Activated CD4-positive, alpha-beta memory T cell treated with anti-CD3 and anti-CD28 coated beads for 36 hours (primary cell): ENCODE measurements at regions of chr17 and their contacts with region 1.

Region 1: DNA sequence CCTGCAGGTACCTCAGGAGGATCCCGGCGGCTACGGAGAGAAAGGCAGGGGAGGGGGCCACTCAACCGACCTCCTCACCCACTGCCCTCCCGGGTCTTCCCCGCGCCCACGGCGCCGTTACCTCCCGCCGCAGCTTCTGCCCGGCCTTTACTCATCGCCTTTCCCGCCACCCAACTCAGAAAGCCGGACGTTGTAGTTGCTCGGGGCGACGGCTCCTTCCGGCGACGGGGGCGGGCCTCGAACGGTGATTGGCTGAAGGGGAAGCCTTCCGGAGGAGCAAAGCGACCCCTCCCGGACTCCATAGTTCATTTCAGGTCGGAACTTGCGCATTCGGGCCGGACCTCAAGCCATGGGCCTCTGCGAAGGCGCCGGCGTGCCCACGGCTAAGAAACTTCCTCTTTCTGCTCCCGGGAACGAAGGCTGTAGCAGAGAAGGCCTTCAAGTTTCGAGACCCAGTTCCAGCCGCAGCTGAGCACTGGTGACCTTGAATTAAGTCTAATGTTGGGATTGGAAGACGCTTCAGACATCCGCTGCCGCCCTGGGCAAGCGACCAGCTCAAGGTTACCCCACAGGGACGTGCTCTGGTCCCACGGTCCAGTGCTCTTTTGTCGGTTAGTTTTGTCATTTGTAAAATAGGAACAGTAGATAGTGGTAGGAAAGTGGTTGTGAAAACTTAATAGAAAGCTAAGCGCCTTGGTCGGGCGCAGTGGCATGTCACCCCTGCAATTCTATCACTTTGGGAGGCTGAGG is at the start of gene PSMC3IP:
- DNase-seq: peak; percentile 98
- H3K4me3 Mint-ChIP-seq: peak within 1 kb of the TSS; percentile 91
- H3K27ac Mint-ChIP-seq: peak within 1 kb of the TSS; percentile 97
- H3K4me1 Mint-ChIP-seq: peaks cover 28% of the 10 kb centered on the region
- H3K27me3 Mint-ChIP-seq: no peaks in the 10 kb centered on the region
- total RNA-seq, gene PSMC3IP: 26.4 to 29.4 TPM

Region 2: DNA sequence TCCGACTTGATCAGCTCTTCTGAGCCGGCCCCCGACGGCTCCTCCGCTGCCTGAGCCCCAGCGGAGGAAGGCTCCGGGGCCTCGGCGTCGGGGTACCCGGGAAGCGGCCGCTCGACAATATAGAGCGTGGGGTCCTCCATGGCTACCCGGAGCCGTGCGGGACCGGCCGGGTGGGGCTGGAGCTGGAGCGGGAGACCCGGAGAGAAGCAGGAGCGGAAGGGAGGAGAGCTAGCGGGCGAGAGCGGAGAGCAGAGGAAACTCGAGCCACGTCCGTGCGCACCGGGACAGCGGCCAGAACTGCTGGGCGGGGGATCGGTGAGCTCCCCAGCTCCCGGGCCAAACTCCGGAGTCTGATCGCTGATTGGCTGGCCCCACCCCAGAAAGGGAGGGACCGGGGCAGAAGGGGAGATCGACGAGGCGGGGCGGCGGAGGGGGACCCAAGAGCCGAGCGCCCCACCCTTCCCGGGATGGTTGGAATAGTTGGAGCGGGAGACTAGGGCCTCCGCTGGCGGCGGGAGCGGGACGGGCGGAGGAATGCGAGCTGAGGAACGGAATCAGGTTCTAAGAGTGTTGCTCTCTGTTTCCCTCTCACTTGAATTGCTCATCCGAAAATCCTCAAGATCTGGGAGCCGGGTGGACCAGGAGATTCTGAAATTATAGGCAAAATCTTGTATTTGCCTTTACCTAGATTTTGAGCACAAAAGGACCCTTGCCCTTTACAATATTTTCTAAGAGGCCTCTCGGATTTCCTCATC is 154.6 kb before region 1 on chr17 and contains the start of gene CAVIN1:
- CTCF ChIA-PET with region 1: no interaction called
- POLR2A ChIA-PET with region 1: no interaction called
- intact Hi-C with region 1: no loop called
- DNase-seq: peak; percentile 34
- H3K4me3 Mint-ChIP-seq: peak within 1 kb of the TSS; percentile 68
- H3K27ac Mint-ChIP-seq: no peak within 1 kb of the TSS
- H3K4me1 Mint-ChIP-seq: peaks cover 17% of the 10 kb centered on the region
- H3K27me3 Mint-ChIP-seq: peaks cover 24% of the 10 kb centered on the region
- total RNA-seq, gene CAVIN1: 2.5 to 2.9 TPM

Region 3: DNA sequence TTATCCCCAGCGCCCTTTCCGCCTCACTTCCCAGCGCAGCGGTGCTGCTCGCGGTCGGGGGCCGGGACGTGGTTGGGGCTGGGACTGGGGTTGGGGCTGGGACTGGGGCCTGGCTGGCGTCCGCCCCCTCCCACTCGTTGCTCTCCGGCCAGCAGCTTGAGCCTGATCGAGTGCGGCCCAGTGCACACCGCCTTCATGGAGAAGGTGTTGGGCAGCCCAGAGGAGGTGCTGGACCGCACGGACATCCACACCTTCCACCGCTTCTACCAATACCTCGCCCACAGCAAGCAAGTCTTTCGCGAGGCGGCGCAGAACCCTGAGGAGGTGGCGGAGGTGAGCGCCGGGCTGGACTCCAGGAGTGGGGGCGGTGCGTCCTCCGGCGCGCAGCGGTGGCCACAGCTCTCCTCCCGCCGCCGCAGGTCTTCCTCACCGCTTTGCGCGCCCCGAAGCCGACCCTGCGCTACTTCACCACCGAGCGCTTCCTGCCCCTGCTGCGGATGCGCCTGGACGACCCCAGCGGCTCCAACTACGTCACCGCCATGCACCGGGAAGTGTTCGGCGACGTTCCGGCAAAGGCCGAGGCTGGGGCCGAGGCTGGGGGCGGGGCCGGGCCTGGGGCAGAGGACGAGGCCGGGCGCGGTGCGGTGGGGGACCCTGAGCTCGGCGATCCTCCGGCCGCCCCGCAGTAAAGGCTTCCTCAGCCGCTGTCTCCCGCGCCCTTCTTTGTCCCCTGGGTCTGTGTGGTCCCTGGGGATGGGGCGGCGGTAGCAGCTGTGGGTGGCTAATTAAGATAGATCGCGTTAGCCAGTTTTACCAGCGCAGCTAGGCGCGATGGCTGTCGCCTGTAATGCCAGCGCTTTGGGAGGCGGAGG is 23.2 kb before region 1 on chr17:
- CTCF ChIA-PET with region 1: interaction called, 10 read pairs
- POLR2A ChIA-PET with region 1: interaction called, 4 read pairs
- intact Hi-C with region 1: no loop called
- DNase-seq: peak; percentile 86
- H3K4me3 Mint-ChIP-seq: peak overlapping the region; percentile 87
- H3K27ac Mint-ChIP-seq: peak overlapping the region; percentile 85
- H3K4me1 Mint-ChIP-seq: peaks cover 9% of the 10 kb centered on the region
- H3K27me3 Mint-ChIP-seq: no peaks in the 10 kb centered on the region

Region 4: GRCh38 chr17:42603318-42603717 is 25.6 kb after region 1 on chr17:
- CTCF ChIA-PET with region 1: interaction called, 42 read pairs
- POLR2A ChIA-PET with region 1: interaction called, 22 read pairs
- intact Hi-C with region 1: no loop called
- DNase-seq: no peak
- H3K4me3 Mint-ChIP-seq: no peak overlapping the region
- H3K27ac Mint-ChIP-seq: no peak overlapping the region
- H3K4me1 Mint-ChIP-seq: peaks cover 60% of the 10 kb centered on the region
- H3K27me3 Mint-ChIP-seq: no peaks in the 10 kb centered on the region

Region 5: GRCh38 chr17:42659079-42659931 is 81.6 kb after region 1 on chr17 and contains the start of gene TUBG2:
- CTCF ChIA-PET with region 1: interaction called, 11 read pairs
- POLR2A ChIA-PET with region 1: interaction called, 4 read pairs
- intact Hi-C with region 1: no loop called
- DNase-seq: peak; percentile 82
- H3K4me3 Mint-ChIP-seq: peak within 1 kb of the TSS; percentile 90
- H3K27ac Mint-ChIP-seq: peak within 1 kb of the TSS; percentile 67
- H3K4me1 Mint-ChIP-seq: peaks cover 29% of the 10 kb centered on the region
- H3K27me3 Mint-ChIP-seq: no peaks in the 10 kb centered on the region
- total RNA-seq, gene TUBG2: 9.3 to 10.1 TPM

Region 6: GRCh38 chr17:42720996-42721583 is 143.4 kb after region 1 on chr17:
- CTCF ChIA-PET with region 1: interaction called, 15 read pairs
- POLR2A ChIA-PET with region 1: no interaction called
- intact Hi-C with region 1: no loop called
- DNase-seq: peak; percentile 14
- H3K4me3 Mint-ChIP-seq: no peak overlapping the region
- H3K27ac Mint-ChIP-seq: no peak overlapping the region
- H3K4me1 Mint-ChIP-seq: peaks cover 2% of the 10 kb centered on the region
- H3K27me3 Mint-ChIP-seq: no peaks in the 10 kb centered on the region

Region 7: DNA sequence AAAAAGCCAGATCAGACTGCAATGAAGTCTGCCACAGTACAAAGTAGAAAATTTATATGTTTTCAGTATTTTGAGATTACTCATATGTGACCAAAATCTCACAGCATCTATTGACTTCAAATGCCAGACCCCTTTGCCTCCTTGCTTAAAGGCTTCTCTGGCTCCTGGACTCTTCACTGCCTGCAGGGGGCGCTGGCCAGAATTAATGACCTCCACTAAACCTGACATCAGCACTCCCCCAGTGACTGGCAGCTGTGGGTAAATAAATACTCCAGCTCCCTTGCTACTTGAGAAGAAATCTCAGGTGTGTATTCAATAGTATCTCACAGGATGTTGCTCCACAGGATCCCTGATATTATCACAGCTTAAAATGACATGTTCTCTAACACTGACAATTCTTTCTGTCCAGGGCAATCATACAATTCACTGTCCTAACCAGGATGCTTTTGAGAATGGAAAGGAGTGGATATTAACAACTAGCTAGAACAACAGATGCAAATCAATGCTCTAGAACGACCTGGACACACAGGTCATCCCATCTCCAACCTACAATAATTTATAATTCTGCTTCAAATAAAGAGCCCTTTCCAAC is 242.3 kb after region 1 on chr17:
- CTCF ChIA-PET with region 1: interaction called, 35 read pairs
- POLR2A ChIA-PET with region 1: interaction called, 4 read pairs
- intact Hi-C with region 1: loop called (anchors 5 kb)
- DNase-seq: peak; percentile 79
- H3K4me3 Mint-ChIP-seq: no peak overlapping the region
- H3K27ac Mint-ChIP-seq: no peak overlapping the region
- H3K4me1 Mint-ChIP-seq: peaks cover 24% of the 10 kb centered on the region
- H3K27me3 Mint-ChIP-seq: no peaks in the 10 kb centered on the region

Region 8: DNA sequence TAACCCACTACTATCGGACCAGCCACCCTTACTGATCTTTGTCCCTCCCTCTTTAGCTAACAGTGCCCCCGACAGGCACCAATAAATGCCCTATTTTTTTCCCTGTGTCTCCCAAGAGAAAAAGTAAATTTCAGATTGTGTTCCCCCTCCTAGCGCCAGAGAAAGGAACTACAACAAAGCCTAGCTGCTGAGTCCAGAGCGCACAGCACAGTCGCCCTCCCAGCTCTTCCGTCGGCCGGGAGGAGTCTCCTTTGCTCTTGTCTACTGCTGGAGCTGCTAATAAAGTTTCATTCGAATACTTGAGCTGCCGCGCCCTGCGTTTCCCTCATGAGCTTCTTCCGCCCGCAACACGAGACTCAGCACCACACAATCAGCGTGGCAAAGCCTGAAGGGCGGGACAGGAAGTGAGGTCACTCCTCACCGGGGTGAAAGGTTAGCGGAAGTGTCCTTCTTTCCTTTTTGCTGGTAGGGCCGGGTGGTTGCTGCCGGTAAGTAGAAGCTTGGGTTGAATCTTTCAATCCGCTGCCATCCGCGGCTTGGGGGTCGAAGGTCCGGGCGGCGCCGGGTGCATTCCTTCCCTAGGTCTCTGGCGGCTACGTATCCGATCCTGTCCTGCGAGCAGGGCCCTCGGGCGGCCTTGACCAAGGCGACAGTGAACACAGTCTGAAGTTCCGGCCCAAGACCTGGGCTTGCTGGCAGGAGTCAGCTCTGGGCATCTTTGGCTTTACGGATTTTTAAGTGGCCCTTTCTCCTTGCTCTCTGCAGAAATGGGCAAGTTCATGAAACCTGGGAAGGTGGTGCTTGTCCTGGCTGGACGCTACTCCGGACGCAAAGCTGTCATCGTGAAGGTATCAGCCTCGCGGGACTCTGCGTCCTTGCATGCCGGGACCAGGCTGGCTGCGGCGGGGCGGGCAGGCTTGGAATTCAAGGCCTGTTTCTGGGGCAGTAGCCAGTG is 420.6 kb after region 1 on chr17 and contains the start of gene RPL27:
- CTCF ChIA-PET with region 1: interaction called, 11 read pairs
- POLR2A ChIA-PET with region 1: no interaction called
- intact Hi-C with region 1: no loop called
- DNase-seq: peak; percentile 99
- H3K4me3 Mint-ChIP-seq: peak within 1 kb of the TSS; percentile 98
- H3K27ac Mint-ChIP-seq: peak within 1 kb of the TSS; percentile 98
- H3K4me1 Mint-ChIP-seq: peaks cover 30% of the 10 kb centered on the region
- H3K27me3 Mint-ChIP-seq: no peaks in the 10 kb centered on the region
- total RNA-seq, gene RPL27: 1,552 to 1,589 TPM